GM10248 (cell line): ENCODE measurements at regions of chr1 and their contacts with region 1.

Region 1: DNA sequence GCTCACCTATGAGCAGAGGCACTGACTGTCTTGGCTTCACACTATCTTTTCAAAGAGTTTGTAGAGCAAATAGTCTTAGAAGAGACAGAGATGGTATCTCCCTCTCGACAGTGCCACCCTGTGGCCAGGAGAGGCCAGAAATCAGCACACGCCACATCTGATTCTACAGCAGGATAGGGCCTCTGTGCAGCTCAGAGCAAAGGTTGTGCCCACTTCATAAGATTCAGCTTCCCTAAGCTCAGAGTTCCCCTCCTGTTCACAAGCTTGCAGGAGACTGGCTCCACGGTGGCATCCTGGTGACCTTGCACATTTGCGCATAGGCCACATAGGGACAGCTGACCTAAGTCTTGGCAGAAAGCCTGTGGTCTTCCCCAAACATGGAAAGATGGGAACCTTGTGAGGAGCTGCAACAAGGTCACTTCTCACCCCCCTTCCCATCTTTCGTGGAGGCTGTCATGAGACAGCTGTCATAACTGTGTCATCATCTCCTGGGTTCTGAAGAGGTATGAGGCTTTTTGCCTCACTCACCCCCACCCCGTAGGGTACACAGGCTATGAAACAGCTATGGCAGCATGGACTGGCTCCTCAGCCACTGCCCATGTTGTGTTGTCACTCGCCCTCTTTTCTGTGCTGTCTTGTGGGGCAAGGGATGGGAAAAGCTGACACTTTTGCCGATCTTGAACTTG is 3.0 kb downstream of the ITLN2 start:
- DNase-seq: peak; percentile 80
- CTCF ChIP-seq: peak; percentile 87

Region 2: GRCh38 chr1:160711602-160712311 is 239.8 kb before region 1 on chr1 and contains the start of gene CD48:
- CTCF ChIA-PET with region 1: interaction called, 10 read pairs
- POLR2A ChIA-PET with region 1: no interaction called
- DNase-seq: peak; percentile 54
- CTCF ChIP-seq: no peak

Region 3: GRCh38 chr1:160777486-160778089 is 174.0 kb before region 1 on chr1:
- CTCF ChIA-PET with region 1: interaction called, 53 read pairs
- POLR2A ChIA-PET with region 1: no interaction called
- DNase-seq: peak; percentile 57
- CTCF ChIP-seq: peak; percentile 74

Region 4: DNA sequence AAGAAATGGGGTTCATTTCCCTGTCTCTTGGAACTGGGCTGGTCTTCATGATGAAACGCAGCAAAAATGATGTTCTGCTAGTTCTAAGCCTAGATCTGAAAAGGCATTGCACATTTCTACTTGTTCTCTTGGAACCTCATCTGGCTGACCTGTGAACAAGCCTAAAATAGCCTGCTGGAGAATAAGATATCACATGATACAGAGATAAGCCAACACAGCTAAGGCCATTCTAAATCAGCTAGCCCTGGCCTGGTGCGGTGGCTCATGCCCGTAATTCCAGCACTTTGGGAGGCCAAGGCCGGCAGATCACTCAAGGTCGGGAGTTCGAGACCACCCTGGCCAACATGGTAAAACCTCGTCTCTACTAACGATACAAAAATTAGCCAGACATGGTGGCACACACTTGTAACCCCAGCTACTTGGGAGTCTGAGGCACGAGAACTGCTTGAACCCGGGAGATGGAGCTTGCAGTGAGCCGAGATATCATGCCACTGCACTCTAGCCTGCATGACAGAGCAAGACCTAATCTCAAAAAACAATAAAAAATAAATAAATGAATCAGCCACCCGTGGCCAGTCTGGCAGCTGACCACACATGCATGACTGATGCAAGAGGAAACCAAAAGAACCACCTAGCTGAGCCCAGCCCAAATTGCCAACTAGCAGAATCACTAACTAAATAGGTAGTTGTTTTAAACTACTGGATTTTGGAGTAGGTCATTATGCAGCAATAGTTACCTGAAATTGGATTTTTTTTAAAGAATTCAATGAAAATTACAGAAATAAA is 106.9 kb before region 1 on chr1:
- CTCF ChIA-PET with region 1: interaction called, 48 read pairs
- POLR2A ChIA-PET with region 1: no interaction called
- DNase-seq: no peak
- CTCF ChIP-seq: no peak

Region 5: DNA sequence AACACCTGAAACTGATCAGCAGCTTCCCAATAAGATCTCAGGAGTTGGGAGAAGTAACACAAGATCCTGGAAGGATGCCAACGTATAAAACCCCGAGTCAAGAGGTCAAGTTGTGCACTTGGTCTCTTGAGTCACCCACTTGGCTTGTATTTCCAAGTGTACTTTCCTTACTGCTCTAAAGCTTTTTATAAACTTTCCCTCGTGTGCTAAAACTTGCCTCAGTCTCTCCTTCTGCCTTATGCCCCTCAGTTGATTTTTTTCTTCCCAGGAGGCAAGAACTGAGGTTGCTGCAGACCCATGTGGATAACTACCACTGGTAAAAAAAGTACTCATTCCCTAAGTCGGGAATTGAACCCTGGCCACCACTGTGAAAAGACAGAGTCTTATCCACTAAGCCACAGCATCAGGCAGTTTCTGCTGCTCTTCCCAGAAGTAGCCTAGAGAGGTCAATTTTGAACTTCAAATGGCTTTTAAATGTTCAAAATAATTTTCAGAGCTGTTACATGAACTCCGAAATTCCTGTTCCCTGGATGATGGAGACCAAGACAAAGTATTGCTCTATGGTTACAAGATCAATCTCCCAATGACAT is 25.8 kb before region 1 on chr1:
- CTCF ChIA-PET with region 1: interaction called, 10 read pairs
- POLR2A ChIA-PET with region 1: no interaction called
- DNase-seq: no peak
- CTCF ChIP-seq: no peak

Region 6: DNA sequence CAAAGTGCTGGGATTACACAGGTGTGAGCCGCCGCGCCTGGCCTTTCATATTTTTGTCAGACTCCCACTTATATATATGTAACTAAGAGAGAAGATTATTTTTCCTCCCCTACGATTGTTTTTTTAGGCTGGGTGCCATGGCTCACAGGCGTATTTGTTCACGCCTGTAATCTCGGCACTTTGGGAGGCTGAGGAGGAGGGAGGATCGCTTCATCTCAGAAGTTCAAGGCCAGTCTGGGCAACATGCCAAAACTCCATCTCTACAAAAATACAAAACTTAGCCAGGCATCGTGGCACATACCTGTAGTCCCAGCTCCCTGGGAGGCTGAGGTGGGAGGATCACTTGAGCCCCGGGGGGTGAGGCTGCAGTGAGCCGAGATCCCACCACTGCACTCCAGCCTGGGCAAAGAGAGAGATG is 26.9 kb after region 1 on chr1:
- CTCF ChIA-PET with region 1: interaction called, 22 read pairs
- POLR2A ChIA-PET with region 1: no interaction called
- DNase-seq: no peak
- CTCF ChIP-seq: no peak